Pancreas (tissue), 10 donors: ENCODE measurements at regions of chr1 and their contacts with region 1.

Region 1: DNA sequence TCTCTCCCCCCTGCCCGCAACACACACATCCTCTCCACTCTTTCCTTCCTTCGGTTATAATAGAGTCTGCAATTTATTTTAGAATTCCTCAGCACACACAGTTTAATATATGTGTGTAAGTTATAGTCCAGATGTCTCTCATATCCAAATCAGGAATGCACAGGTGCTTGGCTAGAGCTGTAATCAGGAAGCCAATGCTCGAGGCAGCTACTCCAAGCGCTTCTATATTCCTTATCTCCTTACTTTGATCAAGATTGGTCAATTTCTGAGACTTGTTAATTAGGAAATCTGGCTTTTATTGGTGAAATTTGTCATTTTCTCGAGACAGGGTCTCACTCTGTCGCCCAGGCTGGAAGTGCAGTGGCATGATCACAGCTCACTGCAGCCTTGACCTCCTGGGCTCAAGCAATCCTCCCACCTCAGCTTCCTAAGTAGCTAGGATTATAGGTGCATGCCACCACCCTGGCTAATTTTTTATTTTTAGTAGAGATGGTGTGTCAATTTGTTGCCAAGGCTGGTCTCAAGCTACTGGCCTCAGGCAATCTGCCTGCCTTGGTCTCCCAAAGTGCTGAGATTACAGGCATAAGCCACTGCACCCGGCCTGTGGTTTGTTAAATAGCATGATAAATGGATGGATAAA is 27.7 kb downstream of the RPL5 start:
- DNase-seq: no peak
- ATAC-seq: peak; percentile 49 to 69 (median 62)
- H3K4me3 ChIP-seq: peak overlapping the region in 2 of 4 donors; percentile 4
- H3K27ac ChIP-seq: no peak overlapping the region
- H3K4me1 ChIP-seq: peaks cover 0 to 6% (median 0%) of the 10 kb centered on the region in 3 donors
- H3K27me3 ChIP-seq: no peaks in the 10 kb centered on the region
- CTCF ChIP-seq: no peak

Region 2: DNA sequence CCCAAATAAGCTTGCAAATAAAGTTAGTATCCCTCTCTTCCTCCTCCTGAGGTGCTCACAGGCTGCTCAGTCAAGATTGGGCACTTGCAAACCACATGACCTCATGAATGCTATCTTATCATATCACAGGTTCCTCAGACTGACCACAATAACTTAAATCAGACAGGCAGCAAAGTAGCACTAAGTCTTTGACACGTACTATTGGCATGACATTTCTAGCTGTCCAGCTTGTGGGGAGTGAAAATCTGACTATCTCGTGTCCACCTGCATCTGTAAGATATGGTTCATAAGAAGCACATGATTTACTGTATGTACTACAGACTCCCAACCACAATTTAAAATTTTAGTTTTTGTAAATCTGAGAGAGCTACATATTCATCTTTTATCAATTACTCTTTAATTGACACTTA is 314.8 kb before region 1 on chr1:
- intact Hi-C with region 1: no loop called
- DNase-seq: no peak
- ATAC-seq: no peak
- H3K4me3 ChIP-seq: no peak overlapping the region
- H3K27ac ChIP-seq: no peak overlapping the region
- H3K4me1 ChIP-seq: no peaks in the 10 kb centered on the region
- H3K27me3 ChIP-seq: no peaks in the 10 kb centered on the region
- CTCF ChIP-seq: no peak

Region 3: DNA sequence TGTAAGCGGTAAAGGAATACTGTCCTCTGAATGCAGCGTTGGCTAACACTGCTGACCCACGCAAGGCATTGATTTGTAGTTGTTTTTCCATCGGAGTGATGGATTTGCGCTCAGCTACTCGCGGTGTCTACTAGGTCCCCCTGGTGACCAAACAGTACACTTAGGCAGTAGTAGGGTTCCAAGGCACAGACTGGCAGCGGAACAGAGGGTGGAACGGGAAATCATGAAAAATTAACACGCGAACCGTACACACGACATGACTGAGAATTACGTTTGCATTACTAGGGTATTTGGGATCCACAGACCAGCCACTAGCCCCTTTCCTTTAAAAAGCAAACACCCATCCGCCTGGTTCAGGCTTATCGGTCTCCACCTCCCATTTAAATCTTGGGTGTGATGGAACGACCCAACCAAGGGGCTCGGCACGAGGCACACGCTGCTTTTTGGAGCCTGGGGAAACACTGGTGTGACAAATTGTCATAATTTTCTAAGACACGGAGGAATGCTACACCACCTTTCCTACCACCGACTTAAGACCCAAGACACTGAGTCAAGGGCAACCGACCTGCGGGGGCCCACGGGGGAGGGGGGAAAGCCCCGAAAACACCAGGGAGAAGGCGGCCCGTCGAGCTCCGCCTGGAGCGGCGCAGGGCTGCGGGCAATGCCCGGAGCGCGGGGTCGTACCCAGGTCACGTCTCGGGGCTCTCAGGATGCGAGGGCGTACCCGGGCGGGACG is 101.0 kb after region 1 on chr1:
- intact Hi-C with region 1: loop called in 2 of 3 experiments (anchors 5 to 10 kb)
- DNase-seq: peak in 4 of 6 donors; percentile 43 to 73 (median 62)
- ATAC-seq: peak; percentile 72 to 87 (median 82)
- H3K4me3 ChIP-seq: peak overlapping the region; percentile 53 to 93 (median 86)
- H3K27ac ChIP-seq: peak overlapping the region; percentile 76 to 96 (median 87)
- H3K4me1 ChIP-seq: peaks cover 0 to 5% (median 0%) of the 10 kb centered on the region in 3 donors
- H3K27me3 ChIP-seq: no peaks in the 10 kb centered on the region
- CTCF ChIP-seq: peak in 3 of 4 donors; percentile 17 to 29 (median 23)

Region 4: DNA sequence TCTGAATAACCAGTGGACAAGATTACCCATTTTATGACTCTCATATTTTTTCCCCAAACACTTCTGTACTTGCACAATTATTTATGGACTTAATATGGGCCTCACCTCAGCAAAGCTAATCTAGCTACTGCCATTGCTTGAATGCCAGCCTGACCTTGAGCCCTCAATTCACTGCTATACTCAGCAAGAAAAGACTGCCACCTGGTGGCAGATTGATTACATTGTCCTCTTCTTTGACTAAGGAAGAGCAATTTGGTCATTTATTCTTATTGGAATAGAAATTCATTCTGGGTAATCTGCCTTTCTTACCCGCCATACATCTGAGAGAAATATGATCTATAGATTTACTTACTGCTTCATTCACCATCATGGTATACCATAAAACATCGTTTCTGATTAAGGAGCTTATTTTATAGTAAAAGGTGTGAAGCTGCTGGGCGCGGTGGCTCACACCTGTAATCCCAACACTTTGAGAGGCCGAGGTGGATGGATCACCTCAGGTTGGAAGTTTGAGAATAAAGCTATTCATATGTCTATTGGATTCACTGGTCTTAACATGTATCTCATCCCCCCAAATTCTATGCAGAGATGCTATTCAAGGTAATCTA is 134.7 kb after region 1 on chr1:
- intact Hi-C with region 1: loop called in 2 of 3 experiments (anchors 5 kb)
- DNase-seq: peak in 4 of 6 donors; percentile 35 to 83 (median 76)
- ATAC-seq: peak; percentile 86 to 90 (median 90)
- H3K4me3 ChIP-seq: no peak overlapping the region
- H3K27ac ChIP-seq: no peak overlapping the region
- H3K4me1 ChIP-seq: peaks cover 5 to 13% (median 10%) of the 10 kb centered on the region in 3 donors
- H3K27me3 ChIP-seq: no peaks in the 10 kb centered on the region
- CTCF ChIP-seq: peak; percentile 75 to 86 (median 82)